ENCODE measurements at regions of chrX and their contacts with region 1.

Region 1: DNA sequence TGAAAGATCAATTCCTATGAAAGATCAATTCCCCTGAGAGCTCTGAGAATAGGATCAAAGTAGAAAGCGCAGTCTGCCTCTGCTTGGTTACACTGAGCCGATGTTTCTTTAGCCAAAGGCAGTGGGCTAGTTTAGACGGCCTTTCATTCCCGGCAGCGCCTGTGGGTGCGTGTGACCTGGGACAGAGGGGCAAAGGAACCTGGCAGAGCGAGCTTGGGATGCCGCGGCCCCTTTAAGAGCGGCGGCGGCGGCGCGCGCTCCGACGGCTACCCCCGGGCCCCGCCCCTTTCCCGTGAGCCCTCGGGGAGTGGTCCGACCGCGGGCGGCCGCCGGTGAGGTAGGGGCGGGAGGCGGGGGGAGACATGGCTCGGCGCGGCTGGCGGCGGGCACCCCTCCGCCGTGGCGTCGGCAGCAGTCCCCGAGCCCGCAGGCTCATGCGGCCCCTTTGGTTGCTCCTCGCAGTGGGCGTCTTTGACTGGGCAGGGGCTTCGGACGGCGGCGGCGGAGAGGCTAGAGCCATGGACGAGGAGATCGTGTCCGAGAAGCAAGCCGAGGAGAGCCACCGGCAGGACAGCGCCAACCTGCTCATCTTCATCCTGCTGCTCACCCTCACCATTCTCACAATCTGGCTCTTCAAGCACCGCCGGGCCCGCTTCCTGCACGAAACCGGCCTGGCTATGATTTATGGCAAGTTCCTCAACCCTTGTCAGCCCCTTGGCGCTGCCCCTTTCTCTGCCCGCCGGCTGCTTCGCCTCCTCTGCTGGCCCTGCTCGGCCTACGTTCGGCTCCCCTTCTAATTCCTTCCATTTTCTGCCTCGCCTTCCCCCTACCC is at the start of gene SLC9A6:
- DNase-seq: peak; percentile 41 to 75
- H3K4me3 ChIP-seq: peak within 1 kb of the TSS; percentile 81
- H3K27ac ChIP-seq: no peak within 1 kb of the TSS
- H3K4me1 ChIP-seq: peaks cover 27% of the 10 kb centered on the region
- H3K27me3 ChIP-seq: no peaks in the 10 kb centered on the region
- CTCF ChIP-seq: no peak
- total RNA-seq, gene SLC9A6: 14.8 and 16.5 TPM in 2 replicates

Region 2: DNA sequence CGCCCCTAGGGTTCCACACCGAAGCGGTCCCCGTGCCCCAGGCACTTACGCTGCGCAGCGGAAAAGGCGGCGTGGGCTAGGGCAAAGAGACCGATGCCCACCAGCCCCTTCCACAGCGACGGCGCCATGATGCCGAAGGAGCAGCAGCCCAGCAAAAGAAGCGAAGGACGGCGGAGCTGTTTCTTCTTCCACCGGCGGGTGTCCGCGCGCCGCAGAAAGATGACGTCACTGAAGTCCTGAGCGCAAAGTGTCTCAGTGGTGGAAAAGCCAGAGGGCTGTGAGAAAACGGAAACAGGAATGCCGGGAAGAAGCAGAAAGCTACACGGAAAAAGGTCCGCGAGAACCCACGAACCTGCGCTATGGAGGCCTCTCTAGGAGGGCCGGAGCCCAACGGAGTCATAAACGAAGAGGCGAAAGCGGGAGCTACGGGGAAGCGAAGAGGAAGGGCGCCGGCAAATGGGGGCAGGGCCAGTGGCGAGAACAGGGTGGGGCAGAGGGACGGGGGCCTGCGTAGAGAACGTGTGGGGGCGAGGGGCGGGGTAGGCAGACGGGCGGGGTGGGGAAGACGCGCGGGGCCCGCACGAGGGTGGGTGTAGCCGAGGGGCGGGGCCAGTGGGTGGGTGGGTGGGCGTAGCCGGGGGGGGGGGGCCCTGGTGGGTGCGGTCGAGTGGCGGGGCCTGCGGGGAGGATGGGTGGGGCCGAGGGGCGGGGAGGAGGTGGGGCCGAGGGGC is 11.6 kb before region 1 on chrX and contains the start of gene MMGT1:
- CTCF ChIA-PET with region 1: no interaction called
- POLR2A ChIA-PET with region 1: no interaction called
- intact Hi-C with region 1: loop called (anchors 1 kb)
- DNase-seq: peak; percentile 77 to 84
- H3K4me3 ChIP-seq: peak within 1 kb of the TSS; percentile 99
- H3K27ac ChIP-seq: peak within 1 kb of the TSS; percentile 93
- H3K4me1 ChIP-seq: peaks cover 28% of the 10 kb centered on the region
- H3K27me3 ChIP-seq: no peaks in the 10 kb centered on the region
- CTCF ChIP-seq: no peak
- total RNA-seq, gene MMGT1: 23.7 and 26.2 TPM in 2 replicates

Region 3: GRCh38 chrX:136065044-136065671 is 79.8 kb after region 1 on chrX:
- CTCF ChIA-PET with region 1: no interaction called
- POLR2A ChIA-PET with region 1: no interaction called
- intact Hi-C with region 1: no loop called
- DNase-seq: peak; percentile 16 to 92
- H3K4me3 ChIP-seq: no peak overlapping the region
- H3K27ac ChIP-seq: peak overlapping the region; percentile 87
- H3K4me1 ChIP-seq: peaks cover 44% of the 10 kb centered on the region
- H3K27me3 ChIP-seq: no peaks in the 10 kb centered on the region
- CTCF ChIP-seq: no peak

Region 4: GRCh38 chrX:136185409-136186022 is 200.2 kb after region 1 on chrX:
- CTCF ChIA-PET with region 1: interaction called, 11 read pairs
- POLR2A ChIA-PET with region 1: no interaction called
- intact Hi-C with region 1: no loop called
- DNase-seq: peak; percentile 25 to 78
- H3K4me3 ChIP-seq: peak overlapping the region; percentile 19; the same call in 1 of the 2 replicates
- H3K27ac ChIP-seq: peak overlapping the region; percentile 4; the same call in 1 of the 2 replicates
- H3K4me1 ChIP-seq: peaks cover 20% of the 10 kb centered on the region
- H3K27me3 ChIP-seq: no peaks in the 10 kb centered on the region
- CTCF ChIP-seq: no peak

Measured in PC-9 (cell line).